OCI-LY7 (cell line): ENCODE measurements at regions of chr7 and their contacts with region 1.

Region 1: GRCh38 chr7:149861446-149862045 is 12.2 kb upstream of the ATP6V0E2 start:
- DNase-seq: no peak
- H3K4me3 ChIP-seq: no peak overlapping the region
- H3K27ac ChIP-seq: no peak overlapping the region
- H3K4me1 ChIP-seq: peaks cover 17% of the 10 kb centered on the region
- CTCF ChIP-seq: peak; percentile 51

Region 2: DNA sequence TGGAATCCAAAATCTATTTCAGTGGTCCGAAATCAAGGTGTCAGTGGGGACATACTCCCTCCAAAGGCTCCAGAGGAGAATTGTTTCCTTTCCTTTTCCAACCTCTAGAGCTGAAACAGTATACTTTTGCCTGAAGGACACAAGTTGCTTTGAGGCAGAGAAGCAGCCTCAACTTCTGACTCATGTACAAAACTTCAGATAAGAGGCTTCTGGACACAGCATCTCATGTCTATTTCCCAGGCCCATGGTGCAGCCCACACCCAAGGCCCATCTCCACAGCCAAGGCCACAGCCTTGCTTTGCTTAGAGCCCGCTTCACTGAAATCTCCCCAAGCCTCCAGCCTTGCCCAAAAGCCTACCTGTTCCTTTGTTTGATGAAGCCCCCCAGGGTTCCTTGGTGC is 157.0 kb before region 1 on chr7:
- CTCF ChIA-PET with region 1: no interaction called
- POLR2A ChIA-PET with region 1: no interaction called
- intact Hi-C with region 1: no loop called
- DNase-seq: no peak
- H3K4me3 ChIP-seq: no peak overlapping the region
- H3K27ac ChIP-seq: no peak overlapping the region
- H3K4me1 ChIP-seq: peaks cover 6% of the 10 kb centered on the region
- CTCF ChIP-seq: no peak

Region 3: DNA sequence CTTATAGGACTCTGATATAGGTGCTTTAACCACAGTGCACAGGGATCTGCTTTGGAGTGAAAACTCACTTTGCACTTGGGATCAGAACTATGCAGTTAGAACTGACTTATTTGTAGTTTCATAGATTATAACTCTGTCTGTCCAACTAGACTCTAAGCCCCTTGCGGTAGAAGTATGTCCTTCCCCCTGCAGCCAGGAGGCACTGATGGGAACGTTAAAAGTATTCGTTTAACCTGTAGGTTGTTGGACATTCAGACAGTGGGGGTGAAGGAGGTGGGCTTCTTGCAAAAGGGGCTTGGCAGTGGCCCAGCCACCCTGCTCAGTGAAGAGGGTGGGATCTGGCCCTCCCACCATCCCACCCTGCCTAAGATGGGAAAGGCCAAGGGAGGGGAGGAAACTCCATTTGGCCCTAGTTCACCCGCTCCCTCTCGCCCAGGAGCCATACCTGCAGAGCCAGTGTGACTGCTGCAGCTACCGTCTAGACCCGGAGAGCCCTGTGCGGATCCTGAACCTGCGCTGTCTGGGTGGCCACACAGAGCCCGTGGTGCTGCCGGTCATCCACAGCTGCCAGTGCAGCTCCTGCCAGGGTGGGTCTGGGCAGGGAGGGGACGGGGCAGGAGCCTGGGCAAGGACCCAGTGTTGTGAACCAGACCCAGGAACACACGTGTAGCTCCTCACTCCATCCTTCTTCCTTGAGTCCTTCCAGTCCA is 29.1 kb before region 1 on chr7:
- CTCF ChIA-PET with region 1: interaction called, 11 read pairs
- POLR2A ChIA-PET with region 1: no interaction called
- intact Hi-C with region 1: no loop called
- DNase-seq: no peak
- H3K4me3 ChIP-seq: no peak overlapping the region
- H3K27ac ChIP-seq: no peak overlapping the region
- H3K4me1 ChIP-seq: no peaks in the 10 kb centered on the region
- CTCF ChIP-seq: no peak

Region 4: GRCh38 chr7:150340024-150340749 is 478.6 kb after region 1 on chr7:
- CTCF ChIA-PET with region 1: no interaction called
- POLR2A ChIA-PET with region 1: no interaction called
- intact Hi-C with region 1: no loop called
- DNase-seq: no peak
- H3K4me3 ChIP-seq: no peak overlapping the region
- H3K27ac ChIP-seq: no peak overlapping the region
- H3K4me1 ChIP-seq: no peaks in the 10 kb centered on the region
- CTCF ChIP-seq: no peak